Right ventricle myocardium superior (tissue), 1 donor: ENCODE measurements at regions of chr7 and their contacts with region 1.

Region 1: GRCh38 chr7:4797858-4798705 is 22.7 kb downstream of the AP5Z1 start:
- DNase-seq: peak; percentile 79
- ATAC-seq: peak; percentile 74

Region 2: DNA sequence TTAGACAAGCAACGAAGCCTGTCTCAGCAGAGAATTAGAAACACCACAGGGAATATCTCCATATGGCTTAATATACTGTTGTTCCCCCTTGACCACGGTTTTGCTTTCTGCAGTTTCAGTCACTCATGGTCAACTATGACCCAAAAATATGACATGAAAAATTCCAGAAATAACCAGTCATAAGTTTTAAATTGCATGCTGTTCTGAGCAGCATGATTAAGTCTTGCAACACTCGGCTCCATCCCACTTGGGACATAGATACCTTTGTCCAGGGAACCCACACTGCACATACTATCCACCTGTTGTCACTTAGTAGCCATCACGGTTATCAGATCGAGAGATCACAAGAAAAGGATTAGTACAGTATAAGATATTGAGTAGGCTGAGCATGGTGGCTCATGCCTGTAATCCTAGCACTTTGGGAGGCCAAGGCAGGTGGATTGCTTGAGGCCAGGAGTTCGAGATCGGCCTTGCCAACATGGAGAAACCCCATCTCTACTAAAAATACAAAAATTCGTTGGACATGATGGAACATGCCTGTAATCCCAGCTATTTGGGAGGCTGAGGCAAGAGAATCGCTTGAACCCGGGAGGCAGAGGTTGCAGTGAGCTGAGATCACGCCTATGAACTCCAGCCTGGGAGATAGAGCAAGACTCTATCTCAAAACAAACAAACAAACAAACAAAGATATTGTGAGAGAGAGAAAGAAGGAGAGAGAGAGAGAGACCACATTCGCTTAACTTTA is 176.5 kb before region 1 on chr7:
- intact Hi-C with region 1: no loop called
- DNase-seq: no peak
- ATAC-seq: no peak

Region 3: DNA sequence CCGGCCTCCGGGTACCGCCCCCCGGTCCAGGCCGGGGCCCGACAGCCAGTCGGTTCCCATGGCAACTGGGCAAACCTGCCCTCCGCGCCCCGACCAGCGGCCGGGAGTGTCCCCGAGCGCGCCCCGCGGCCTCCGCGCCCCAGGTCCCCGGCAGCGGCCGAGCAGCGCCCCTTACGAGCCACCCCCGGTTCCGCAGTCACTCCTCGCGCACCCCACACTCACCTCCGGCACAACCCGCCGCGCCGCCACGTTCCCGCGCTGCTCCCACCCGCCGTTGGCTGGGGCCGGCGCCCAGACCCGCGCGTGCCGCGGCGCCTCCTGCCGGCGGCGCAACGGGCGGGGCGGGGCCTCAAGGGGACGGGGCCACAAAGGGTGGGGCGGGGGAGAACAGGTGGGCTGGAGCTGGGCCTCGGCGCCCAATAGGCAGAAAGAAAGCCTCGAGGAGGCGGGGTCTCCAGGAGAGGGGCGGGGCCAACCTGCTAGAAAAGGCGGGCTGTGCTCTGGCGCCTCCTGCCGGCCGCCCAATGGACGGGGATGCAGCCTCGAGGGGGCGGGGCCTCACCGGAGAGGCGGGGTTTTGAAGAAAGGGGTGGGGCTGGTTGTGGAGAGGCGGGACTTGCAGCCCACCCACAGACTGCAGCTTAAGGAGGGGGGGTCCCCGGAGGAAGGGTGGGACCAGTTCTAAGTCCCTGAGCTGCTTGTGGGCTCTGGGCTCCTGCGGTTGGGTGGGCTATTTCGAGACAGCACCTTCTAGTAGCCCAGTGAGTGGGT is 85.5 kb after region 1 on chr7 and contains the start of gene RADIL:
- intact Hi-C with region 1: loop called (anchors 10 kb)
- DNase-seq: peak; percentile 96
- ATAC-seq: peak; percentile 92
- total RNA-seq, gene RADIL: 4.0 TPM

Region 4: GRCh38 chr7:5088906-5089305 is 290.8 kb after region 1 on chr7:
- intact Hi-C with region 1: loop called (anchors 5 kb)
- DNase-seq: no peak
- ATAC-seq: no peak

Region 5: DNA sequence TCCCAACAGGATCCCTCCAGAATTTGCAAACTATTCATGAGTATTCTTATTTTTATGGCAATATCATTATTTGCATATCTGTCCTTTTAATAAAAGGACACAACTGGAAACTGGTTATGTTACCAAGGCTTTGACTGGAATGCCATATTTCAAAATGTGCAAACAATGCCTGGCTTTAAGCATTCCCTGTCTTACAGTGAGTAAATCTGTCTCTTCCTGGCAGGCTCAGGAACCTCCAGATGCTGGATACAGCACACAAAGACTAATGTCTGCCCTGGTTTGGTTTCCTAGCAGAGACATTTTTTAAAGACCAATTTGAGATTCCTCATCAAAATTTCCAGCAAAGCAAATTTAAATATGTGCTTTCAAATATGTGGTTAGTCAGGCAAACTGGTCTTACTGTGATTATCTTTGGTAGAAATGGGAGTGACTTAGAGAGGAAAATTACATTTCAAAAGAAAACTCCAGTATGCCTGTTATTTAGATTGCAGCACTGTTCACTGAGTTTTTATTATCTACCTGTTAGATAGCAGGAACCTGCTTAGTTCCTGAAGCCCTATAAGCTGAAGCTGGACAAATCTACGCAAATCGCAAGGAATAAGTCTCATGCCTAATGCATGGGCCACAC is 952.1 kb after region 1 on chr7:
- intact Hi-C with region 1: no loop called
- DNase-seq: no peak
- ATAC-seq: no peak